GM12878 (cell line): ENCODE measurements at regions of chr2 and their contacts with region 1.

Region 1: DNA sequence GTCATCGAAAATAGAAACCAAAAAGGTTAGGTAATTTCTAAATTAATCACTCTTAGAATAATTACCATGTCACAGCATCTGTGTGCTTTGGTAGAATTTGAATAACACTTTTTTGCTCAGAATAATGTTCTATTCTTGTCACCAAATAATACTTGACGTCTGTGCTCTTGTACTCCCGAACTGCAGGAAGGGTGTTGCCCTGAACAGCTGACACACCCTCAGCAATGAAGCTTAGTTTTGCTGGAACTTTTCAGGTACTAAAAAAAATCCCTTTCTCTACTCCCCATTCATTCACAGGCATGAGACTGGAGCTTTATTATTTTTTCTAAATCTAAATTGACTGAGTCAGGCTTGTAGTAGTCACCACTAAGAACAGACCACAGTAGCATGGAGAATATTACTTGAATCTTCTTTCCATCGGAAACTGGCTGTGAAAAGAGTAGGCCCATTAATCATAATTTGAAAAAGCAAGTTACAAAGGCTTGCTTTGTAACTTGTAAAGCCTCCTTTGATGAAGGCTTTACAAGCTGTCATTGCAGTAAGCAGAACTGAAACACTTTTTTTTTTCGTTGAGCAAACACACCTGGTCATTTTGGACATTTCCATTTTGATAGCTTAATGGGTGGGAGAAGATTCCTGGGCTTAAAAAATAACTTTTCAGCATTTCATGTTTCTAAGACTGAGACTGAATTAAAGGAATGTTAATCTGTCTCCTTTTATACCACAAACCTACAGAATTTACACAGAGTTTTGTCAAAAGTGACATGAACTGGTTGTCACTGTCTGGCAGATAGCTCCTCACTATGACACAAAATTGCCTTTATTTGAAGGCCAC is 70.3 kb upstream of the PELI1 start:
- DNase-seq: peak; percentile 91
- ATAC-seq: peak; percentile 69
- H3K4me3 ChIP-seq: peak overlapping the region; percentile 28
- H3K27ac ChIP-seq: peak overlapping the region; percentile 98
- H3K4me1 ChIP-seq: peaks cover 44% of the 10 kb centered on the region
- H3K27me3 ChIP-seq: no peaks in the 10 kb centered on the region
- CTCF ChIP-seq: no peak
- EP300 ChIP-seq: peak; percentile 96 to 99
- POLR2A ChIP-seq: no peak
- RAD21 ChIP-seq: 0 out of 2 replicates have a peak, but pooled peaks have one; percentile 15

Region 2: GRCh38 chr2:64052468-64053241 is 161.8 kb before region 1 on chr2:
- CTCF ChIA-PET with region 1: interaction called, 11 read pairs
- POLR2A ChIA-PET with region 1: interaction called, 5 read pairs
- RAD21 ChIA-PET with region 1: interaction called, 12 read pairs
- SMC1A ChIA-PET with region 1: interaction called, 12 read pairs
- in situ Hi-C with region 1: no loop called
- intact Hi-C with region 1: loop called (anchors 1 kb)
- DNase-seq: no peak
- ATAC-seq: no peak
- H3K4me3 ChIP-seq: no peak overlapping the region
- H3K27ac ChIP-seq: no peak overlapping the region
- H3K4me1 ChIP-seq: peaks cover 25% of the 10 kb centered on the region
- H3K27me3 ChIP-seq: no peaks in the 10 kb centered on the region
- CTCF ChIP-seq: no peak
- EP300 ChIP-seq: no peak
- POLR2A ChIP-seq: no peak
- RAD21 ChIP-seq: no peak

Region 3: DNA sequence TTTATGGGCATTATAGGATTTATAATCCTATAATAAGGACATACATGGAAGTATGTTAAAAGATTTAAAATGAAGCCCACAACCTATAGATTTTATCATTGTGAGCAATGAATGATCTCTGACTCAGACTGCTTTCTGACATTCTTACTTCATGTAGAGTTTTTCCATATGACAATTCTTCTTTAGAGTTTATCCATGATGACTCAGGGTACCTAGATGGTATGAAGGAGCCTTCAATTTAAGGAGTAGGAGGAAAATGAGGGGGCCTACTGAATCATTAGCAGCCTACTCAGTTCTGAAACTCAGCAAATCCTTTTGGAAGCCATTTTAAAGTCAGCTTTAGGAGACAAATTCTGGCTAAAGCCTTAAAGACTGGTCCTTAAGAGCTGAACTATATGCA is 80.7 kb before region 1 on chr2:
- CTCF ChIA-PET with region 1: interaction called, 5 read pairs
- POLR2A ChIA-PET with region 1: interaction called, 5 read pairs
- RAD21 ChIA-PET with region 1: interaction called, 54 read pairs
- SMC1A ChIA-PET with region 1: interaction called, 13 read pairs
- in situ Hi-C with region 1: no loop called
- intact Hi-C with region 1: no loop called
- DNase-seq: no peak
- ATAC-seq: no peak
- H3K4me3 ChIP-seq: no peak overlapping the region
- H3K27ac ChIP-seq: no peak overlapping the region; the same call in 1 of the 2 replicates
- H3K4me1 ChIP-seq: peaks cover 46% of the 10 kb centered on the region
- H3K27me3 ChIP-seq: no peaks in the 10 kb centered on the region
- CTCF ChIP-seq: no peak
- EP300 ChIP-seq: no peak
- POLR2A ChIP-seq: no peak
- RAD21 ChIP-seq: no peak

Region 4: DNA sequence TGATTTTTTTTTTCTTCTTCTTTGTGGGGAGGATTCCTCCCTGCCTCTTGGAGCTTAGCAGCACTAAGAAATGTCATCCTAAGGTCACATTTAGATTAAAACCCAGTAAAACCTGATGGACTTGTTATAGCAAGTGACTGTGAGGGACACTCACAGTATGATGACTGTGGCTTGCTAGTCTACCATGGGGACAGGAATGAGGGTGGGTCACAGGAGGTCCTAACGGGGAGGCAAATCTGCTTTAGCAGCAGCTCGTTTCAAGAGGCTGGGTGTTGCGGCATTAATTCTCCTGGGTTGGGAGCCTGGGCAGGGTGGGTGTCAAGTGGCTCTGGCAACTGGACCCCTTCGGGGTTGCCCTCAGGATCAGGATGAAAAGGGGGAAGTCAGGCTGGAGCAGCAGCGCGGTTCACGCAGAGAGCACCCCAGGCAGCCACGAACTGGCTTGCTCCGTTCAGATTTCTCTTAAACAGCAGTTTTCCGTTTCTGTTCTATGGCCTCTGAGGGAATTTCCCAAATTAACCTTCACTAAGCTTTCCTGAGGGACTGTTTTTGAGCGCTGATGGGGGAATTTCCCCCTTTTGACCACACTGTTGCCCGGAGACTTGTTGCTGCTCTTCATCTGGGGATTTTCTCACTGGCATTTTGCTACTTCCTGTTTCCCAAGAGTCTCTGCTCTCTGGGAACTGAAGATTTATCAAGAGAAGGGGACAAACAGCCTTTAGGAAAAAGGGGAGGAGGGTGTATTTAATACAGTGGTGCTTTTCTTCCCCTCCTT is 10.5 kb before region 1 on chr2:
- CTCF ChIA-PET with region 1: interaction called, 24 read pairs
- POLR2A ChIA-PET with region 1: interaction called, 59 read pairs
- RAD21 ChIA-PET with region 1: interaction called, 83 read pairs
- SMC1A ChIA-PET with region 1: interaction called, 110 read pairs
- in situ Hi-C with region 1: no loop called
- intact Hi-C with region 1: loop called (anchors 1 kb)
- DNase-seq: peak; percentile 88
- ATAC-seq: peak; percentile 76
- H3K4me3 ChIP-seq: peak overlapping the region; percentile 9; the same call in 1 of the 2 replicates
- H3K27ac ChIP-seq: peak overlapping the region; percentile 75
- H3K4me1 ChIP-seq: peaks cover 50% of the 10 kb centered on the region
- H3K27me3 ChIP-seq: no peaks in the 10 kb centered on the region
- CTCF ChIP-seq: no peak
- EP300 ChIP-seq: peak; percentile 38 to 80; a peak in 2 of 4 replicates
- POLR2A ChIP-seq: peak; percentile 68
- RAD21 ChIP-seq: no peak

Region 5: DNA sequence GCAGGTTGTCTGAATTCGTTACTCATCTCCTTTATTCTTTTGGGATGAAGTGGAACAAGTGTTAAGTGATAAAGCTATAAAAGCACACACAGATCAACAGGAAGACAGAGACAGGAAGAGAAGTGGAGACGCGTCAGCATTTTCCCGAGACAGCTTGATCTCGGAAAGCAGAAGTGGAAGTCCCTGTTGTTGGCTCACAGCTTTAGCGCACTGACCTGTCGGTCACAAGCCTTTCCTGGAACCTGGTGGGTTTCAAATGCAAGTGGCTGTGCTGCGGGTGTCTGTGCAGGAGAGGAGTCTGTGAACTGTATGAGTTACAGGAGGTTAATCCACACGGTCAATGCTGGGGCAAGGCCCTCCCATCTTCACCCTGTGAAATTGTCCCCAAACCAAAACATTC is 46.3 kb after region 1 on chr2:
- CTCF ChIA-PET with region 1: interaction called, 6 read pairs
- POLR2A ChIA-PET with region 1: no interaction called
- RAD21 ChIA-PET with region 1: interaction called, 10 read pairs
- SMC1A ChIA-PET with region 1: interaction called, 7 read pairs
- in situ Hi-C with region 1: no loop called
- intact Hi-C with region 1: no loop called
- DNase-seq: peak; percentile 75
- ATAC-seq: peak; percentile 99
- H3K4me3 ChIP-seq: peak overlapping the region; percentile 31; the same call in 1 of the 2 replicates
- H3K27ac ChIP-seq: peak overlapping the region; percentile 75
- H3K4me1 ChIP-seq: peaks cover 10% of the 10 kb centered on the region
- H3K27me3 ChIP-seq: no peaks in the 10 kb centered on the region
- CTCF ChIP-seq: no peak
- EP300 ChIP-seq: peak; percentile 35 to 77; a peak in 3 of 4 replicates
- POLR2A ChIP-seq: no peak
- RAD21 ChIP-seq: no peak

Region 6: DNA sequence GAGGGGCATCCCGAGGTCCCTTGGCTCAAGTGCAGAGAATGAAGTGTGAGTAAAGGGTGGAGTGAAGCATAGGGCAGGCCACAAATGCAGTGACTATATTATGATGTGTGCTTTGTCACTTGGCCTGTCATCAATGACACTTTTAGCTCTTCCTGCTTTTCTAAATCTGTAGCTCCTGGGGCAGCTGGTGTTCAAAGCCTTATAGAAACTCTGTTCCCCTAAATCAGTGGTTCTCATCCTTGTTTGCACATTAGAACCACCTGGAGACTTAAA is 103.9 kb after region 1 on chr2:
- CTCF ChIA-PET with region 1: interaction called, 28 read pairs
- POLR2A ChIA-PET with region 1: interaction called, 6 read pairs
- RAD21 ChIA-PET with region 1: interaction called, 186 read pairs
- SMC1A ChIA-PET with region 1: interaction called, 38 read pairs
- in situ Hi-C with region 1: no loop called
- intact Hi-C with region 1: no loop called
- DNase-seq: no peak
- ATAC-seq: peak; percentile 83
- H3K4me3 ChIP-seq: no peak overlapping the region
- H3K27ac ChIP-seq: no peak overlapping the region
- H3K4me1 ChIP-seq: peaks cover 13% of the 10 kb centered on the region
- H3K27me3 ChIP-seq: no peaks in the 10 kb centered on the region
- CTCF ChIP-seq: no peak
- EP300 ChIP-seq: 0 out of 4 replicates have a peak, but pooled peaks of 1 of the 2 experiments have one; percentile 13
- POLR2A ChIP-seq: no peak
- RAD21 ChIP-seq: no peak